Mammary epithelial cell (primary cell): ENCODE measurements at regions of chr1 and their contacts with region 1.

Region 1: DNA sequence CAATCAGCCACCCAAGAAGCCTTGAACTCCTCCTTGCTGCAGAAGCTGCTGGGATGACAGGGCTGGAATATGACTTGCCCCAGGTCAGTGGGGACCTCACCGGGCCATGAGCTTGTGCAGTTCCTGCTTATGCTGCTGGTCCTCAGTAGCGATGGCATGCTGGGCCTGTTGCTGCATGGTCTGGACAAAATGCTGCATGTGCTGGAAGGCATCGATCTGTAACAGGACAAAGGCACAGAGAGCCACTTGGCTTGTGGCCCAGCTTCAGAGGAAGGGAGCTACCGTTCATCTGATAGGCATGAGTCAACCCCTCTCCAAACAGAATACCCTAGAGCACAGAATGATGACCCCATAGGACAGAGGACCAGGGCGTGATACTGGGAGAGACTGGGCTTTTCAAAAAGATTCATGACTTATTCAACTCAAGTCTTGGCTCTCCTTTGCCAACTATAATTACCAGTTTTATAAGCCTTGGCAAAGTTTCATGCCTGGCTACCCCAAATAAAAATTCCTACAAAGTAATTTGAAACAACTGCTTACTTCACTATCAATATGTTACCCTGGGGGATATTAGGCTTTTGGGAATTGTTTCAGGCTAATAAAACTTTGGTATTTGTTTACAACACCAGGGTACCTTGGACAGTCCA is 34.7 kb upstream of the EXOSC10 start:
- DNase-seq: peak; percentile 62
- H3K4me3 ChIP-seq: no peak overlapping the region
- H3K27ac ChIP-seq: no peak overlapping the region
- H3K4me1 ChIP-seq: peaks cover 35% of the 10 kb centered on the region
- H3K27me3 ChIP-seq: no peaks in the 10 kb centered on the region
- CTCF ChIP-seq: no peak

Region 2: DNA sequence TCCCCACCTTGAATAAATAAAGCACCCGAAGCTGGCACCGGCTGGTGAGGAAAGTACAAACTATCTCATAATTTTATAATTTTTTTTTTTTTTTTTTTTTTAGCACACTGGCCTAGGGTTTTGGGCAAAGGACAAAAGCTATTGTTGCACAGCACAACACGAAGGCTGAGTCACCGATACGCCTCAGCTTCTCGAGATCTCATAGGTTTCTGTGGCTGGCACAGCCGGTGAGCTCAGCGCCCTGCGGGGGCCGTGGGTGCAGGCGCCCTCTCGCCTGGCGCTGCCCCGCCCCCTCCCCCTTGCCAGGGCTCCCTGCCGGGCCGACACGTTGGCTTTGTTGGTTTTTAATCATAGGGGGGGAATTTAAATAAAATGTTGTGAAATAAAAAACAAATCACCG is 355.2 kb before region 1 on chr1:
- CTCF ChIA-PET with region 1: no interaction called
- dilution Hi-C with region 1: no loop called
- in situ Hi-C with region 1: no loop called
- intact Hi-C with region 1: no loop called
- DNase-seq: peak; percentile 98
- H3K4me3 ChIP-seq: no peak overlapping the region
- H3K27ac ChIP-seq: peak overlapping the region; percentile 85
- H3K4me1 ChIP-seq: peaks cover 23% of the 10 kb centered on the region
- H3K27me3 ChIP-seq: no peaks in the 10 kb centered on the region
- CTCF ChIP-seq: no peak

Region 3: DNA sequence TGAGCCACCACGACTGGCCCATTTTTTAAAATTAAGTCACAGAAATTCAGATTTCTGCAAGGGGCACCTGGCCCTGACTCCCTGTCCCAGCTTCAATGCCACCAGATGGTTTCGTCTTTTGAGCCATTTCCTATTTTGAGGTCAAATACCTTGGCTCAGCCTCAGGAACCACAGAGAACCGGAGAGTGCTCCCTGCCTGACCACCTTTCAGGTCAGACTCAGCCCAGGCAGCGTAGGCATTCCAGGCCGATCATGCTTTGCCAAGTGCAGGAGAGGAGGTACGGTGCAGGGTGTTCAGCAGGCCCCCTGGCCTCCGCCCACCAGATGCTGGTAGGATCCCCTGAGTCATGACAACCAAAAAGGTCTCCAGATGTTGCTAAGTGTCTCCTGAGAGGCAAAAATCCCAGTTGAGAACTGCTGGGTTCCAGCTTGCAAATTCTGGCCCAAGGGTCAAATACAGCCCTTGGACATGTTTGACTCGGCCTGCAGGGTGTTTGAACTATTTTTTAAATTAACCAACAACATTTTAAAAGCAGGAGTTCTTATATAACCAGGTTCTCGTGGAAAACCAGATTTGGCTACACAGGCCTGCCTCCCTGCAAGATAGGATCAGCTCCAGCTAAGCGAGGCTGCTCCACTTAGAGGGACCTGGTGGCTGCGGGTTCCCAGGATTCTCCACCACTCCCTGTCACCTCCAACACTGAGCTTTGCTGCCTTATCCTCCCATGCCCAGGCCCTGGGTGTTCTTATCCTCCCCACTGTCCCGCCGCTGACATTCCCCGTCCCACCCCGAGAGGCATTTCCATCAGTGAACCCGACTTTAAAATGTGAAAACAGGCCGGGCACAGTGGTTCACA is 183.8 kb before region 1 on chr1:
- CTCF ChIA-PET with region 1: no interaction called
- dilution Hi-C with region 1: no loop called
- in situ Hi-C with region 1: no loop called
- intact Hi-C with region 1: no loop called
- DNase-seq: no peak
- H3K4me3 ChIP-seq: no peak overlapping the region
- H3K27ac ChIP-seq: no peak overlapping the region
- H3K4me1 ChIP-seq: no peaks in the 10 kb centered on the region
- H3K27me3 ChIP-seq: no peaks in the 10 kb centered on the region
- CTCF ChIP-seq: no peak

Region 4: DNA sequence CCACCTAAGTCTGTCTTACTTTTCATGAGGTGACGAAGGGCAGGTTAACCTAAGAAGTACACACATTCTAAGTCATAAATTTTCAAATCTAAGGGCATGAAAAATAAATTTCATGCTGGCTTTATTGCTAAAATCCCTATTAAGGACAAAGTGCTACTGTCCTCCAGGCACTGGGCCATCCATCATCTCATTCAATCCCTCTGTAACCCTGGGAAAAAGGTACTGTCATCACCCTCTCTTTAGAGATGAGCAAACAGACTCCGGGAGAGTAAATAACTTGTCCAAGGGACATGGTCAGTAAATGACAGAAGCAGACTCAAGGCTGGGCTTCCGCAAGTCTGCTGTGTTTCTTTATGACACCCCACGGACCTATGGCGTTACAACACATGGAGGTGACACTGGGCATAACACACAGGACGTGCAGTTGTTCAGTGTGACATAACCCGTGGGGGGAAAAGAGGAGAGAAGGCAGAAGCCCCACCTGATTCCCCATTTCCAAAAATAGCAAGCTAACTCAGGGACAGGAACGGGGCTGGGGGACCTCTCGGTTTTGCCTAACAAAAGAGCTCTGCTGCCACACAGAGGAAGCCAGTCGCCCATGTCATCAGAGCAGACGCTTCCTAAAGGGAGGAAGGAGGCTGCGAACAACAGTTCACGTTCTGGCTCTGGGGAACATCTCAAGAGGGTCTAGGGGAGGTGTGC is 62.0 kb before region 1 on chr1:
- CTCF ChIA-PET with region 1: no interaction called
- dilution Hi-C with region 1: loop called (anchors 5 kb)
- in situ Hi-C with region 1: no loop called
- intact Hi-C with region 1: no loop called
- DNase-seq: no peak
- H3K4me3 ChIP-seq: no peak overlapping the region
- H3K27ac ChIP-seq: no peak overlapping the region
- H3K4me1 ChIP-seq: no peaks in the 10 kb centered on the region
- H3K27me3 ChIP-seq: no peaks in the 10 kb centered on the region
- CTCF ChIP-seq: no peak

Region 5: GRCh38 chr1:11099310-11100149 is 34.8 kb before region 1 on chr1 and contains the start of gene EXOSC10:
- CTCF ChIA-PET with region 1: no interaction called
- dilution Hi-C with region 1: loop called (anchors 5 kb)
- in situ Hi-C with region 1: no loop called
- intact Hi-C with region 1: no loop called
- DNase-seq: peak; percentile 83
- H3K4me3 ChIP-seq: peak within 1 kb of the TSS; percentile 77 to 97 (median 93)
- H3K27ac ChIP-seq: peak within 1 kb of the TSS; percentile 82
- H3K4me1 ChIP-seq: no peaks in the 10 kb centered on the region
- H3K27me3 ChIP-seq: no peaks in the 10 kb centered on the region
- CTCF ChIP-seq: no peak
- total RNA-seq, gene EXOSC10: 62.0 to 66.6 TPM

Region 6: GRCh38 chr1:11194407-11195176 is 60.2 kb after region 1 on chr1:
- CTCF ChIA-PET with region 1: no interaction called
- dilution Hi-C with region 1: loop called (anchors 5 kb)
- in situ Hi-C with region 1: no loop called
- intact Hi-C with region 1: no loop called
- DNase-seq: no peak
- H3K4me3 ChIP-seq: no peak overlapping the region
- H3K27ac ChIP-seq: no peak overlapping the region
- H3K4me1 ChIP-seq: no peaks in the 10 kb centered on the region
- H3K27me3 ChIP-seq: no peaks in the 10 kb centered on the region
- CTCF ChIP-seq: no peak